HepG2 (cell line): ENCODE measurements at regions of chr2 and their contacts with region 1.

Region 1: GRCh38 chr2:20507166-20507692 is 60.4 kb downstream of the RHOB start:
- DNase-seq: no peak
- ATAC-seq: peak; percentile 55
- H3K4me3 ChIP-seq: no peak overlapping the region
- H3K27ac ChIP-seq: peak overlapping the region; percentile 14
- H3K4me1 ChIP-seq: peaks cover 71% of the 10 kb centered on the region
- H3K27me3 ChIP-seq: no peaks in the 10 kb centered on the region
- CTCF ChIP-seq: no peak
- EP300 ChIP-seq: no peak
- POLR2A ChIP-seq: no peak
- RAD21 ChIP-seq: no peak

Region 2: DNA sequence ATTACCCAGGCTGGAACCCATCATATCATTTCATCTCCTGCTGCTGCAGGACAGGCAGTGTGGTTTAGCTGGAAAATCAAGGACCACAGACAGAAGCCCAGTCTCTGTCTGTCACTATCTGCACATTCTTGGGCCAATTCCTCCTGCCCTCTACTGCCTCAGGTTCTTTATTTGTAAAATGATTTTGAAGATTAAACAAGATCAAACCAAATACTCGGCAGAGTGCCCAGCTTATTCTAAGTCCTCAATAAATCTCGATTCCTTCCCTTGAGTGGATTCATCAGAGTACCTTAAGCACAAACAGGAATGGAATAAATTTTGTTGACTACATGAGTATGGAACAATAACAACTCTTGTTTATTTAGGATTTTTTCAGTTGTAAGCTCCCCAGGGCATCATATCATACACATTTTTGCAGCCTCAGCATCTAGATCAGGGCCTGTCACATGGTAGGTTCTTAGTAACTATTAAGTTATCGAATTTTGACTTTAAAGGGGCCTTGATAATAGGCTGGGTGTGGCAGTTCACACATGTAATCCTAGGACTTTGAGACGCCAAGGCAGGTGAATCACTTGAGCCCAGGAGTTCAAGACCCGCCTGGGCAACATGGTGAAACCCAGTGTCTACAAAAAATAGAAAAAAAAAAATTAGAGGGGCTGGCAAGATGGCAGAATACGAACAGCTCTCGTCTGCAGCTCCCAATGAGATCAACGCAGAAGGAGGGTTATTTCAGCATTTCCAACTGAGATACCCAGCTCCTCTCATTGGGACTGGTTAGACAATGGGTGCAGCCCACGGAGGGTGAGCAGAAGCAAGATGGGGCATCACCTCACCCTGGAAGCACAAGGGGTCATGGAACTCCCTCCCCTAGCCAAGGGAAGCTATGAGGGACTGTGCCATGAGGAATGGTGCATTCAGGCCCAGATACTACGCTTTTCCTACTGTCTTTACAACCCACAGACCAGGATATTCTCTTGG is 49.3 kb before region 1 on chr2:
- CTCF ChIA-PET with region 1: no interaction called
- POLR2A ChIA-PET with region 1: no interaction called
- in situ Hi-C with region 1: no loop called
- intact Hi-C with region 1: loop called (anchors 1 kb)
- DNase-seq: no peak
- ATAC-seq: no peak
- H3K4me3 ChIP-seq: no peak overlapping the region
- H3K27ac ChIP-seq: no peak overlapping the region
- H3K4me1 ChIP-seq: peaks cover 37% of the 10 kb centered on the region
- H3K27me3 ChIP-seq: no peaks in the 10 kb centered on the region; a peak in 1 of 5 replicates
- CTCF ChIP-seq: no peak
- EP300 ChIP-seq: no peak
- POLR2A ChIP-seq: no peak
- RAD21 ChIP-seq: no peak

Region 3: DNA sequence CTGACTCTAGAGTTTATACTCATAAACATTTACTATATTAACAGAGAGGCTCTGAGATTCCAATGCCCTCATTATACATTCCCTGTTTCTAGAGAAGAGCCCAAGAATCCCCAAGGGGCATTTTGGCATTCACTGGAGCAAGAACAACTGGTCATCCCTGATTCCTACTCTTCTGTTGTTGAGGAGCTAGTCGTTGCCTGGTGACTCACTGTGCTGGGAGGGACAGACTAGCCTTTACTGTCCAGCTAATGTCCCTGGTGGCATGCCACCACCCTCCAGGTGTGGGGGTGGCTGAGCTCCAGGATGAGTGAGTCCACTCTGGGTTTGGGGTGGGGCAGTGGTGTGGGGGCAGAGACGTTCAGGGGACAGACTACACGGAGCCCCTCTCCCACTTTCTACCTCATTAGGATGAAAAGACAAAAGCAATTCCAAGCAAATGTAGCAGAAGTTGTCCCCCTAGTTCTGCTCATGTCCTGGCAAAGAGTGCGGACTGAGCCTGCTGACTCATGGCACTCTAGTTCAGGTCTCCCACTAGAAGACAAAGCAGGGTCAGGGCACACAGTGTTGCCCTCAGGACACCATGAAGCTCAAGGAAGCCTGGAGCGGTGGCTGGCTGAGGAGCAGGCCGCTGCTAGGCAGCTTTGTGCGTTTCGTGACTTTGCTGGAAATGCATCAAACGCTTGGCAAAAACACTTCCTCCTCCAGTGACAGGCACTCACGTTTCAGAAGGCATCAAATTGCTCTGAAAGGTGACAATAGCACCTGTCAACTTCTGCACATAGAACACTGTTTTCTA is 10.9 kb before region 1 on chr2:
- CTCF ChIA-PET with region 1: no interaction called
- POLR2A ChIA-PET with region 1: interaction called, 11 read pairs
- in situ Hi-C with region 1: no loop called
- intact Hi-C with region 1: no loop called
- DNase-seq: peak; percentile 51
- ATAC-seq: peak; percentile 62
- H3K4me3 ChIP-seq: peak overlapping the region in 1 of 3 experiments; percentile 9; a peak in 1 of 6 replicates
- H3K27ac ChIP-seq: no peak overlapping the region
- H3K4me1 ChIP-seq: peaks cover 57% of the 10 kb centered on the region
- H3K27me3 ChIP-seq: no peaks in the 10 kb centered on the region
- CTCF ChIP-seq: no peak
- EP300 ChIP-seq: no peak
- POLR2A ChIP-seq: no peak
- RAD21 ChIP-seq: no peak

Region 4: GRCh38 chr2:20525041-20526035 is 18.1 kb after region 1 on chr2:
- CTCF ChIA-PET with region 1: no interaction called
- POLR2A ChIA-PET with region 1: interaction called, 55 read pairs
- in situ Hi-C with region 1: no loop called
- intact Hi-C with region 1: no loop called
- DNase-seq: peak; percentile 96
- ATAC-seq: peak; percentile 96
- H3K4me3 ChIP-seq: peak overlapping the region; percentile 2 to 56 (median 21); a peak in 5 of 6 replicates
- H3K27ac ChIP-seq: peak overlapping the region; percentile 69
- H3K4me1 ChIP-seq: peaks cover 81% of the 10 kb centered on the region
- H3K27me3 ChIP-seq: no peaks in the 10 kb centered on the region
- CTCF ChIP-seq: peak; percentile 80
- EP300 ChIP-seq: peak; percentile 48 to 53; a peak in 3 of 4 replicates
- POLR2A ChIP-seq: peak in 1 of 2 experiments; percentile 70; a peak in 2 of 4 replicates
- RAD21 ChIP-seq: peak; percentile 82

Region 5: GRCh38 chr2:20617892-20618467 is 110.8 kb after region 1 on chr2:
- CTCF ChIA-PET with region 1: no interaction called
- POLR2A ChIA-PET with region 1: no interaction called
- in situ Hi-C with region 1: no loop called
- intact Hi-C with region 1: no loop called
- DNase-seq: peak; percentile 94
- ATAC-seq: peak; percentile 92
- H3K4me3 ChIP-seq: no peak overlapping the region
- H3K27ac ChIP-seq: peak overlapping the region; percentile 95
- H3K4me1 ChIP-seq: peaks cover 63% of the 10 kb centered on the region
- H3K27me3 ChIP-seq: no peaks in the 10 kb centered on the region
- CTCF ChIP-seq: peak; percentile 60
- EP300 ChIP-seq: peak; percentile 49 to 56; a peak in 2 of 4 replicates
- POLR2A ChIP-seq: peak in 1 of 2 experiments; percentile 53; a peak in 1 of 4 replicates
- RAD21 ChIP-seq: peak; percentile 92

Region 6: DNA sequence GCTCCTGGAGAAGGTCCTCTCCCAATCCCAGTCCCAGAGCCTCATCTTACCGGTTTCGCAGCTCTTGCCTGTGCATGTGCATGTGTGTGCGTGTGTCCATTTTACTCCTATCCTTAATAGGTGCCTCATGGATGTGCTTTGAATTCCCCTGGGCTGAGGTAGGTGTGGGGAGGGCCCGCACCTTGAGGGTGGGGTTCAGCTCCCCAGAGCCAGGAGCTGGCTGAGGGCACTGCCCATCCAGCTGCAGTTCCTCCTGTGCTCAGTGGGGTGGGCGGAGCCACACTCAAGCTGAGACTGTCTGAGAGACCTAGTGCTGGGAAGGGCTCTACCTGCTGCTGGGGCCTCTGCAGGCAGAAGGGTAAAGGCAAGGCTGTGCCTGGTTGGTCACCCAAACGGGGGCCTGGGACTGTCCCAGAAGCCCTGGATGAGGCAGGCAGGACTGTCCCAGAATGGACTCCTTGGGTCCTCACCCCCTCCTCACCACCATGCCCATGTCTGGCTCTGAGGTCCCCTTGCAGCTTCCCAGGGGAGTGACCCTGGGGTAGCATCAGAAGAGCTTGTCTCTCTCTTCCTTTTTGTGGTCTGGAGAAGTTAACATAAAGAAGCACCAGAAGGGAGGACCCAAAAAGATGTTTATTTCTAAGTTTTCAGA is 168.6 kb after region 1 on chr2:
- CTCF ChIA-PET with region 1: no interaction called
- POLR2A ChIA-PET with region 1: no interaction called
- in situ Hi-C with region 1: no loop called
- intact Hi-C with region 1: no loop called
- DNase-seq: peak; percentile 78
- ATAC-seq: peak; percentile 87
- H3K4me3 ChIP-seq: peak overlapping the region; percentile 7 to 64 (median 36); a peak in 3 of 6 replicates
- H3K27ac ChIP-seq: peak overlapping the region; percentile 75
- H3K4me1 ChIP-seq: peaks cover 44% of the 10 kb centered on the region
- H3K27me3 ChIP-seq: no peaks in the 10 kb centered on the region
- CTCF ChIP-seq: no peak
- EP300 ChIP-seq: 0 out of 4 replicates have a peak, but pooled peaks of 1 of the 2 experiments have one; percentile 7
- POLR2A ChIP-seq: 0 out of 4 replicates have a peak, but pooled peaks of 1 of the 2 experiments have one; percentile 19
- RAD21 ChIP-seq: peak; percentile 12; the same call in 1 of the 2 replicates